Activated CD4-positive, alpha-beta memory T cell treated with anti-CD3 and anti-CD28 coated beads for 36 hours (primary cell): ENCODE measurements at regions of chr5 and their contacts with region 1.

Region 1: DNA sequence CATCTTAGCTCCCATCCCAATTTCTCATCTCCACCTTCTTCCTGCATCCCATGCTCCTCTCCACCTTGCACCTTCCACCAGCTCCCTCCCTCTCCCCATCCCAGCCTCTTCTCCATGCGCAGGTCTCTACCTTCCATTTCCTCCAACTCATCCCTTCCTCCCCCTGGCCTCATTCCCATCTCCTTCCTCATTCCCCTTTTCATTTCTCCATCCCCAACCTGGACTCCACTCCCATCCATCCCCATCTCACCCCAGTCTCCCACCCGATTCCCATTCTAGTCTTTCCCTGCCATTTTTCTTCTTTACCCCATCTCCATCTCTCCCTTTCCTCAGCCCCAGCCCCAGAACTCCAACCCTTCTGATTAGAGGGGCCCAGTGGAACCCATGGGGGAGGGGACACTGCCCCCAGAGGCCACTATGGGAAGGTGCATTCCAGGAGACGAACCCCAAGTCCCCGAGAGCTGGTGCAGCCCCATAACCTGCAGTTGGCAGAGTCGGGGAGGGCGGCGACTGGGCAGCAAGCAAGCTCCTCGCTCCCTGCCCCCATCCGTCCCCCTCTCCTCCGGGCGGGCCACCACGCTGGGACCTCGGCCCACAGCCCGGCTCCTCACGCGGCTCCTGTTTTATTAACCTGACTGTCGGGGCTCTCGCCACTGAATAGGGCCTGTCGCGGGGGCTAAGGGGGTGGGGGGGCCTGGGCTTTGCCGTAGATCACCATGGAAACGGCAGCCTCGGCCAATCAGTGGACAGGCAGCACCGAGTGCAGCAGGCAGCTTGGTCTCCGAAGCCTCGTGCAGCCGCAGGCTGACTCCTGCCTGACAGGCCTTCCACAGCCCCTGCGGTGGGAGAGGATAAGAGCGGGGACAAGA is 66.7 kb downstream of the PCDH1 start:
- DNase-seq: peak; percentile 31
- H3K4me3 Mint-ChIP-seq: no peak overlapping the region
- H3K27ac Mint-ChIP-seq: no peak overlapping the region
- H3K4me1 Mint-ChIP-seq: no peaks in the 10 kb centered on the region
- H3K27me3 Mint-ChIP-seq: peaks cover 42% of the 10 kb centered on the region

Region 2: DNA sequence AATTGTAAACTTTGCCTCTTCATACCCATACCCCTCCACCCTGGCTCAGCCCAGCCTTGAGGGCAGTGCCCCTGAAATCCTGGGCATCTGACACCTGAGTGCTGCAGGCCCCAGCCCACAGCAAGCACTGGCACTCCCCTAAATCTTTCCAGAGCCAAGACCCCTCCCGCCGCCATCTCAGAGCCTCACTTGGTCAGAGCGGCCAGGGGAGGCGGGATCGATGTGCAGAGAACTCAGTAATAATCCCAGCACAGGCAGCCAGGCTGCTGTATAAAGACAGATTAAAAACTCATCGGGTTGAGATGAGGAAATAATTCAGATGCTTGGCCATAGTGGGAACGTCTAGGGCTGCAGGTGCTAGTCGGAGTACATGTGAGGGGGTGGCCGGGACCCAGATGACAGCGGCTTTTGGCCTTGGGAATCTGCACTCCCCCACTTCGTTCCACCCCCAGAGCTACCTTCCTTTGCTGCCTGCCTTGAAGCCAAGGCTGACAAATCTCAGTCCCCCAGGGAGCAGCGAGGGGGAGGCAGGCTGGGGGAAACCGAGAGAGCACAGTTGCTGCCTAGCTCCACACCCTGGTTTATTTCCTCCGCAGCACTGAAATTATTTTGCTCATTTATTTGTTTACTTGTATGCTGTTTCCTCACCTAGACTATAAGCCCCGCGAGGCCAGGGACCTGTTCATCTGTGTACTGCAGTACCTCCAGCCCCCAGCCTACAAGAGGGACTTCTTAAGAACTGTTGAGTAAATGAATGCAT is 110.0 kb before region 1 on chr5:
- CTCF ChIA-PET with region 1: interaction called, 12 read pairs
- POLR2A ChIA-PET with region 1: no interaction called
- intact Hi-C with region 1: loop called (anchors 2 kb)
- DNase-seq: peak; percentile 49
- H3K4me3 Mint-ChIP-seq: peak overlapping the region; percentile 69
- H3K27ac Mint-ChIP-seq: no peak overlapping the region
- H3K4me1 Mint-ChIP-seq: peaks cover 17% of the 10 kb centered on the region
- H3K27me3 Mint-ChIP-seq: peaks cover 9% of the 10 kb centered on the region

Region 3: DNA sequence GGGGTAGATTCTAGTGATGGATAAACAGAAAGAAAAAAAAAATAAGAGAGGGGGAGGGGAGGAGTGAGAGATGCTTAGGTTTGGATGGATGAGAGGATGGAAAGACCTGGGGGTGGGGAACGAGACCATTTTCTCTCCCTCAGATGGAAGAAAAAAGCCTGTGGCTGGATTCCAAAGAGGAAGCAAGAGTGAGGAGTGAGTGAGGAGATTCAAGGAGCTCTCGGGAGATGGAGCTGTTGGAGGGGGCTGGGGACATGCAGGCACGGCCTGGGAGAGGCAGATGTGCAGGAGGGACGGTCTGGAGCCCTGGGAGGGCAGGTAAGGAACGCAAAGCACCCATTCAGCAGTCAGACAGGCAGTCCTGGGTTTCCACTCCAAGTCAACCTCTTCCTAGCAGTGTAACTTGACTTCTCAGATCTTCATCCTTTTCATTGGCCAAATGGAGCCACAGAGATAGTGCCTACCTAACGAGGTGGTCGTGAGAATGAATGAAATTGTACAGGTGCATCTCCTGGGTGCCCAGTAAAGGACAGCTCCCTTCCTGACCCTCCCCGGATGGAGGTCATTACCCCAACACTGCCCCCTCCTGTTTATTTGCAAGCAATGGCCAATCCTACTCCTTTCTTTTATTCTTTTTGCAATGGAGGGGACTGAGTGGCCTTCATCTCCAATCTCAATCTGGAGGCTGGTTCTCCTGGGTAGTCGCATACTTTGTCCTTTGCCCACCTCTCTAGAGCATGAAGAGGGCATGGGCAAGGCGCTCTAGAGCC is 14.5 kb after region 1 on chr5:
- CTCF ChIA-PET with region 1: interaction called, 23 read pairs
- POLR2A ChIA-PET with region 1: no interaction called
- intact Hi-C with region 1: no loop called
- DNase-seq: peak; percentile 30
- H3K4me3 Mint-ChIP-seq: no peak overlapping the region
- H3K27ac Mint-ChIP-seq: no peak overlapping the region
- H3K4me1 Mint-ChIP-seq: no peaks in the 10 kb centered on the region
- H3K27me3 Mint-ChIP-seq: peaks cover 2% of the 10 kb centered on the region